MCF 10A (cell line): ENCODE measurements at regions of chr1 and their contacts with region 1.

Region 1: GRCh38 chr1:64242895-64243756 is 39.7 kb downstream of the UBE2U start:
- DNase-seq: peak; percentile 57
- H3K4me3 Mint-ChIP-seq: no peak overlapping the region
- H3K27ac Mint-ChIP-seq: no peak overlapping the region
- H3K4me1 Mint-ChIP-seq: no peaks in the 10 kb centered on the region
- H3K27me3 Mint-ChIP-seq: no peaks in the 10 kb centered on the region
- CTCF ChIP-seq: peak; percentile 38

Region 2: DNA sequence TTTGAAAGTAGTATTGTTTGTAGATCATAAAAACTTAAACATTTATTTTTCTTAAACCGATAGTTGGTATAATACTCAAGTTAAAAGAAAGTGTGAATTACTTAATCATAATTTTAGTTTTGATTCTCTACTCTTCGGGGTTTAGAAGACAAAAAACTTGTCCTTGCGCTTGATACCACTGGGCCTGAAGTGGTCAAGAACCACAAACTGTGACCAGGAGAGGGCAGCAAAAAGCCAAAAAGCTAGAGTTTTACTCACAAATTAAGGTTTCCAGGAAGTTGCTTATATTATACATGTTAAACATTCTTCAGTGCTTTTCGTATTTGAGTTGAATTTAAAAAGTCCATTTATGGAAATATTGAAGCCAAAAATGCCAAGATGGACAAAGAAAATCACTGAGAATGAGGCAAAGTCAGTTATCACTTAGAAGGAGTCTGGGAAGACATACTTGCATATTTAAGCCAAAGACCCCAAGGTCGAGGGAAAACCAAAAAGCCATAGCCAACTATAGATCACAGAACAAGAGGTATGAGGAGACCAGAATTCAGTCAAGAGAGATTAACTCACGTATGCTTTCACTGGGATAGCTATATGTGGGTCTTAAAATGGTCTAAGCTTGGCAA is 685.6 kb before region 1 on chr1:
- CTCF ChIA-PET with region 1: interaction called, 9 read pairs
- POLR2A ChIA-PET with region 1: no interaction called
- intact Hi-C with region 1: loop called (anchors 5 kb)
- DNase-seq: peak; percentile 51
- H3K4me3 Mint-ChIP-seq: no peak overlapping the region
- H3K27ac Mint-ChIP-seq: no peak overlapping the region
- H3K4me1 Mint-ChIP-seq: peaks cover 5% of the 10 kb centered on the region
- H3K27me3 Mint-ChIP-seq: no peaks in the 10 kb centered on the region
- CTCF ChIP-seq: peak; percentile 52

Region 3: GRCh38 chr1:63621698-63622097 is 621.4 kb before region 1 on chr1:
- CTCF ChIA-PET with region 1: interaction called, 52 read pairs
- POLR2A ChIA-PET with region 1: no interaction called
- intact Hi-C with region 1: loop called (anchors 1 kb)
- DNase-seq: no peak
- H3K4me3 Mint-ChIP-seq: no peak overlapping the region
- H3K27ac Mint-ChIP-seq: no peak overlapping the region
- H3K4me1 Mint-ChIP-seq: peaks cover 27% of the 10 kb centered on the region
- H3K27me3 Mint-ChIP-seq: no peaks in the 10 kb centered on the region
- CTCF ChIP-seq: no peak

Region 4: DNA sequence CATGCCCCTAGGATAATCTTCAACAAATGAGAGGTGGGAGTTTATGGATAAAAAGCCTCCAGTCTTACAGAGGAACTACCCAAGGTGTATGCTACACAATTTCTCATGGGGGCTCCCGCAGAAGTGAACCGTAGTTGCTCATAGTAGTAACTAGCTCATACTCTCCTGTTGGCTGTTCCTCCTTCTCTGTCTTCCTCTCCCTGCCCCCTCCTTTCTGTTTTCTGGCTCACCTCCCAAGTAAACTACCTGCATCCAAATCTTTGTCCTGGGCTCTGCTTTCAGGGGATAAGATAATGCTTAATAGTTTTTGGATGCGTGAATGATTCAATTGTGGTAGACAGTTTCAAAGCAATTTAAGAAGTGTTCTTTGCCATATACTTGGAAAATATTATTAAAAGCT is 559.4 kb before region 1 on chr1:
- CTCF ChIA-PET with region 1: interaction called, 18 read pairs
- POLR2A ChIA-PET with region 1: no interaction called
- intact Hi-C with region 1: no loop called
- DNase-seq: no peak
- H3K4me3 Mint-ChIP-seq: no peak overlapping the region
- H3K27ac Mint-ChIP-seq: no peak overlapping the region
- H3K4me1 Mint-ChIP-seq: no peaks in the 10 kb centered on the region
- H3K27me3 Mint-ChIP-seq: no peaks in the 10 kb centered on the region
- CTCF ChIP-seq: no peak

Region 5: GRCh38 chr1:63917571-63918417 is 325.3 kb before region 1 on chr1:
- CTCF ChIA-PET with region 1: no interaction called
- POLR2A ChIA-PET with region 1: no interaction called
- intact Hi-C with region 1: loop called (anchors 2 kb)
- DNase-seq: peak; percentile 46
- H3K4me3 Mint-ChIP-seq: no peak overlapping the region
- H3K27ac Mint-ChIP-seq: no peak overlapping the region
- H3K4me1 Mint-ChIP-seq: peaks cover 16% of the 10 kb centered on the region
- H3K27me3 Mint-ChIP-seq: no peaks in the 10 kb centered on the region
- CTCF ChIP-seq: peak; percentile 12

Region 6: DNA sequence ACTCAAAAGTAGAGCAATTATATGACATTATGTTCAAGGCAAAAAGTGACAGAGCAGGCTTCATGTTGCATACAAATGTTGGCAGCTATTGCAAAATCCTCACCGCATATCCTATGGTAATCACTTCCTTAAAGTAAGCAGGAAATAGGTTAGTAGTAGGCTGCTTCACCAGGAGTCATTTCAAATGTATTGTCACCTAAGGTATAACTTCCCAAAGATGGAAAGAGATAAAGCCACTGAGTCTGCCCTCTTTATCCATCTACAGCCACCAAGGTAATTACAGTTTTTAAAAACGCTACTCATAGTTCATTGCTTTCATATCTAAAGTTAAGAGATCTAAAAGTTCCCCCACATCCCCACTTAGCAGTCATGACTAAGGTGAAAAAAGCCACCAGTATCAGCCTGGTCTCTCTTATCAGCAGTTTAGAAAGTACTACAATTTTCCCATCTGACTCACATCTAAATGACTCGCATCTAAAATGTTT is 71.3 kb before region 1 on chr1:
- CTCF ChIA-PET with region 1: no interaction called
- POLR2A ChIA-PET with region 1: no interaction called
- intact Hi-C with region 1: no loop called
- DNase-seq: peak; percentile 44
- H3K4me3 Mint-ChIP-seq: no peak overlapping the region
- H3K27ac Mint-ChIP-seq: peak overlapping the region; percentile 46
- H3K4me1 Mint-ChIP-seq: peaks cover 21% of the 10 kb centered on the region
- H3K27me3 Mint-ChIP-seq: no peaks in the 10 kb centered on the region
- CTCF ChIP-seq: no peak

Region 7: DNA sequence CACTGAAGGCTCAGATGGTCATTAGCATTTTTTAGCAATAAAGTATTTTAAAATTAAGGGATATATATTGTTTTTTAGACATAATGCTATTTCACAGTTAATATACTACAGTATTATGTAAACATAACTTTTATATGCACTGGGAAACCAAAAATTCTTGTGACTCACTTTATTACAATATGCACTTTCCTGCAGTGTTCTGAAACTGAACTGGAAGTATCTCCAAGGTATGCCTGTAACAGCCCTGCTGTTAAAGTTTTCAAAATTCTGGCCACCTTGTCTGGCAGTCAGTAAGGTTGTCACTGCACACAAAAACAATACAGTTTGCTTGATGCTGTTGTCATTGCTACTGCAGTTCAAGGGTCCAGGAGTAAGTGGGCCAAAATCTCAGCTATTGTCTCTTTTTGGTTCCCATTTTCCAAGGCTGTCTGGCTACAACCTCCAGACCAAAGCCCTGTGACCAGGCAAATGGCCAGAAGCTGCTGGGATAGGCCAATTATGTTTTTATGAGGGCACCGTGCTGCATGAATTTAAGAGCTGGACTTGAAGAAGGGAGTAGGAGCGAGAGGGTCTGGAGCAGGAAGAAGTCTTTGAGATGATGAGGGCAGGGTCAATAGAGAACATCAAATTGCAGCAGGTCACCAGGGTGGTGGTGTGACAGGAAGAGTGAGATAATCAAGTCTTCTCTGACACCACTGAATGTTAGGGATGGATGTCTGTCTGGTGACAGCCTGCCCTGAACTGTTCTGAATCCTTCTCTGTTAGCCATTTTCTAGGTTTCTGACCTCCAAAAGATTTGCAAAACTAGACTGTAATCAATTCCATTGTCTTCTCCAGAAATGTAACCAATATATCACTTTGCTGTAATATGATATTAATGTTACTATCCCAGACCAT is 144.5 kb after region 1 on chr1:
- CTCF ChIA-PET with region 1: no interaction called
- POLR2A ChIA-PET with region 1: no interaction called
- intact Hi-C with region 1: no loop called
- DNase-seq: no peak
- H3K4me3 Mint-ChIP-seq: no peak overlapping the region
- H3K27ac Mint-ChIP-seq: no peak overlapping the region
- H3K4me1 Mint-ChIP-seq: no peaks in the 10 kb centered on the region
- H3K27me3 Mint-ChIP-seq: peaks cover 12% of the 10 kb centered on the region
- CTCF ChIP-seq: no peak